GM10248 (cell line): ENCODE measurements at regions of chr7 and their contacts with region 1.

Region 1: DNA sequence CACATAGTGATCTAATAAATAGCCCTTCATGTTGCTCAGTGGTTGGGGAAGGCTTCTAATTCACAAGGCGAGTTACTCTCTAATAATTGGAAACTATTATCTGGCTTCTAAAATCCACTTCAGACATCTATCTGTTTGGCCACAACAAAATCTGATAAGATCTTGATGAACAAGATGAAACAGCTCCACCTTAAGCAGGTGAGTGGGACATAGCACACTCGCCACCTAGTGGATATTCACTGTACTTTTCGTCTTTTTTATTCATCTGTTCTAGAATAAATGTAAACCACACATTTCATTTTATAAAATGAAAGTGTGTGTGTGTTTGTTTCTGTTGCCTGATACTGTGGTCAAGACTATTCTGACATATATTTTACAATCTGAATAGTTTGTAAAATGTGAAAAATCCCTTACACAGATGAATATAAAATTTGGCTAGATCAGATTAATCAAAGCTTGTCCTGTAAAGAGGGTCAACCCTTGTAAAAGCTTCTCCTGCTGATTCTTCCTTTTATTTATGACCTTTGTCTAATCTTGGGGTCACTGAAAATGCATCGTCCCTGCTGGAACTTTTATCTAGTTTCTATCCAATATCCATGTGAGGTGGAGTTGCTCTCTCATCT is 26.5 kb upstream of the CNTNAP2 start:
- DNase-seq: peak; percentile 32
- CTCF ChIP-seq: peak; percentile 57

Region 2: DNA sequence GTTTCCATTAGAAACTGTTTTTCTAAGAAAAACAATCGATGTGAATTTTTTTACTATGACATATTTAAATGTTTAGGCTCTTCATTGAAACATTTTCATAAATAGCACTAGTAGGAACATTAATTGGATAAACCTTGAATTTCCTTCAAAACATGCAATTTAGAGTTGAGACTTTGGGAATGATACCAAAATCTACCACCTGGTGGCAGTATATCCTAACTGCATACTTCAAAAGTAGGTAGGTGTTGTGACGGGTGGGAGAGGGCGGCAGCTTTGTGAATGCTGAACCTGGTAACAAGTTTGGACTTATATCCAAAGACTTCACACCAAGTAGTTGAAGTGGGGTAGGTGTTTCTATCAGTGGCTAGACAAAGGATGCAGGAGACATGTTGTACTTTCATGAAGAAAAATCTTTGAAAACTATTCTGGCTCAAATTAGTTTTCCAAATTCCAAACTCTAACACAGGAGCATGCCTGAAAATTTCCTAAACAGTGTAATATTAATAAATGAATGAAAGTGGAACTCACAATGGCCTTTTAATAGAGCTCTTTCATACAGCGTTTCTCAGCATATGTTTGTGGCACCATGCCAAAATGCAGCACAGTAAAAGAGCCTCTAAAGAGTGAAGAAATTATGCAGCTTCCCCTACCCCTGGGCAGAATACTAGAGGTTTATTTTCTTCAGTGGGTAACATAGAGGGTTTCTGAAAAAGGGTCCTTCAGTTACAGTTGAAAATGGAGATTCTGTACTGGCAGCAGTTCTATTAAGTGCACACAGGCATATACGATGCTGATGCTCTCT is 1053.3 kb before region 1 on chr7:
- CTCF ChIA-PET with region 1: interaction called, 21 read pairs
- POLR2A ChIA-PET with region 1: no interaction called
- DNase-seq: peak; percentile 15
- CTCF ChIP-seq: peak; percentile 70

Region 3: GRCh38 chr7:146074195-146074765 is 15.9 kb before region 1 on chr7:
- CTCF ChIA-PET with region 1: interaction called, 10 read pairs
- POLR2A ChIA-PET with region 1: no interaction called
- DNase-seq: no peak
- CTCF ChIP-seq: no peak

Region 4: GRCh38 chr7:146366938-146367337 is 276.8 kb after region 1 on chr7:
- CTCF ChIA-PET with region 1: no interaction called
- POLR2A ChIA-PET with region 1: no interaction called
- DNase-seq: no peak
- CTCF ChIP-seq: no peak